ENCODE measurements at regions of chr19 and their contacts with region 1.

Region 1: DNA sequence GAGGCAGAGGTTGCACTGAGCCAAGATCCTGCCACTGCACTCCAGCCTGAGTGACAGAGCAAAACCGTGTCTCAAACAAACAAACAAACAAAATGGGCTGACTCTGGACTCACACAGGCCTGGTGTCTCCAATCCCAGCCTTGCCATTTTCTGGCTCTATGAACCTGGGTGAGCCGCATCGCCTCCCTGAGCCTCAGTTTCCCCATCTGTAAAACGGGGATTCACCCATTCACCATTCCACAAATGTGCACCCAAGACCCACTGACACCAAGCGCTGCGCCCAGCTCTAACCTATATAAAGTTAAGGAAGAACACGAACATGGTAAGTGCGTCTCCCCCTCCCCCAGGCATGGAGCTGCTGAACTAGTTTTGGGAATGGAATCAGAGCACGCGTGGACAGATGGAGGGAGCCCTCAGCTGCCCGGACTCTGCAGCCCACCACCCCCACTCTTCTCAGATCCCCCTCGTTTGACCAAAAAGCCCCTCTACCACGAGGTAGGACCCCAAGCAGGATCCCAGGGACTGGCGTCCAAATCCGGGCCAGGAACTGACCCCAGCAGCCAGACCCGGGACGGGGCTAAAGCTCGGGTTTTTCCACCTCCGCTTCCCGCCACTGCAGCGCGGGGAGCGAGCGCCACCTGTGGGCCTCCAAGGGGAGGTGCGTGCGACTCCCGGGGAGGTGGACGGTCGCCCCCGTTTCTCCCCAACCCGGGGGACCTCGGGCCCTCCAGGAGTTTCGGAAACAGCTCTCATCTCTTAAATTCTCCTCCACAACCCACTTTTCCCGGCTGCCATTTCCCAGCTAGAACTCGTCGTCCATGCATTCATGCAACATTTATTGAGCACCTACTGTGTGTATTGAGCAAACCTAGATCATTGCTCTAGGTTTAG is 33.0 kb upstream of the ADGRE5 start:
- DNase-seq: peak; percentile 70 to 88 (median 78)
- H3K4me3 ChIP-seq: peak overlapping the region in 1 of 3 donors; percentile 28
- H3K27ac ChIP-seq: no peak overlapping the region
- H3K4me1 ChIP-seq: peaks cover 0 to 2% (median 0%) of the 10 kb centered on the region in 3 donors
- H3K27me3 ChIP-seq: no peaks in the 10 kb centered on the region
- CTCF ChIP-seq: peak; percentile 81

Region 2: DNA sequence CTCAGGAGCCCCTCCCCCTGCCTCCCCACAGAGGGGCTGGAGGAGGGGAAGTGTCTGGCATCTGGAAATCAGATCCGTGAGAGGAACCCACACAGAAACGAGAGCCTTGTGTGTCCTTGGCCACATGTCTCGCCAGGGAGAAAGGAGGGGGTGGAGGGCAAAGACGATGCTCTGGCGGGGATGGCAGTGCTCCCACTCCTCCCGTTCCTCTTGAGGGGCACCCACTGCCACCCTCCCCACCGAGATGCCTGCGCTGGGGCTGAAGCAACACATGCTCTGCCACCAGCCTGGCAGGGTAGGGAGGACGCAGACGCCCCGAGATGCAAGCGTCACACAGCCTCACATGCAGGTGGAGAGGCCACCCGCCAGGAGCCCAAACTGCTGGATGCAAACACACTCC is 145.1 kb before region 1 on chr19:
- intact Hi-C with region 1: loop called (anchors 10 kb)
- DNase-seq: peak in 2 of 5 donors; percentile 45 to 69
- H3K4me3 ChIP-seq: no peak overlapping the region
- H3K27ac ChIP-seq: no peak overlapping the region
- H3K4me1 ChIP-seq: peaks cover 0 to 4% (median 0%) of the 10 kb centered on the region in 3 donors
- H3K27me3 ChIP-seq: no peaks in the 10 kb centered on the region
- CTCF ChIP-seq: no peak